Endothelial cell of umbilical vein (primary cell): ENCODE measurements at regions of chr14 and their contacts with region 1.

Region 1: DNA sequence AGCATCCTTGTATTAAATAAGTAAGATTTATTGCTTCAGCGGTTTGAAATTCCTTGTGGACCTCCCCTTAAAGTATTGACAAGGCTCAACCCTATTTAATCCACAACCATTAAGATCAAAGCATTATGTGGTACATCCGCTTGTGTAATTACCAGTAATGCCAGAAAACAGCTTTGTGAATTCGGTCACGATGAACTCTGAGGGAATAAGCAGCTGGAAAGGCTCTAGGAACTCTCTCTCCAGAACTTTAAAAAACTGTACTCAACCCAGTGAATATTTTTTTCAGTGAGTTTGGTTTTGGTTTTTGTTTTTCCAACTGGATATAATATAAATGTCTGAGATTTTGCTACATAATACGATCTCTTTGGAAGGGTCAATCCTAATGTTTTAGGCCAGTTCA is 49.3 kb upstream of the DIO2 start:
- DNase-seq: no peak
- H3K4me3 ChIP-seq: no peak overlapping the region
- H3K27ac ChIP-seq: no peak overlapping the region
- H3K4me1 ChIP-seq: no peaks in the 10 kb centered on the region
- H3K27me3 ChIP-seq: no peaks in the 10 kb centered on the region
- CTCF ChIP-seq: no peak
- POLR2A ChIP-seq: no peak

Region 2: GRCh38 chr14:79740061-79740601 is 520.5 kb before region 1 on chr14:
- CTCF ChIA-PET with region 1: no interaction called
- POLR2A ChIA-PET with region 1: no interaction called
- dilution Hi-C with region 1: no loop called
- intact Hi-C with region 1: loop called (anchors 5 kb)
- DNase-seq: no peak
- H3K4me3 ChIP-seq: no peak overlapping the region
- H3K27ac ChIP-seq: no peak overlapping the region
- H3K4me1 ChIP-seq: no peaks in the 10 kb centered on the region
- H3K27me3 ChIP-seq: no peaks in the 10 kb centered on the region
- CTCF ChIP-seq: no peak
- POLR2A ChIP-seq: no peak

Region 3: DNA sequence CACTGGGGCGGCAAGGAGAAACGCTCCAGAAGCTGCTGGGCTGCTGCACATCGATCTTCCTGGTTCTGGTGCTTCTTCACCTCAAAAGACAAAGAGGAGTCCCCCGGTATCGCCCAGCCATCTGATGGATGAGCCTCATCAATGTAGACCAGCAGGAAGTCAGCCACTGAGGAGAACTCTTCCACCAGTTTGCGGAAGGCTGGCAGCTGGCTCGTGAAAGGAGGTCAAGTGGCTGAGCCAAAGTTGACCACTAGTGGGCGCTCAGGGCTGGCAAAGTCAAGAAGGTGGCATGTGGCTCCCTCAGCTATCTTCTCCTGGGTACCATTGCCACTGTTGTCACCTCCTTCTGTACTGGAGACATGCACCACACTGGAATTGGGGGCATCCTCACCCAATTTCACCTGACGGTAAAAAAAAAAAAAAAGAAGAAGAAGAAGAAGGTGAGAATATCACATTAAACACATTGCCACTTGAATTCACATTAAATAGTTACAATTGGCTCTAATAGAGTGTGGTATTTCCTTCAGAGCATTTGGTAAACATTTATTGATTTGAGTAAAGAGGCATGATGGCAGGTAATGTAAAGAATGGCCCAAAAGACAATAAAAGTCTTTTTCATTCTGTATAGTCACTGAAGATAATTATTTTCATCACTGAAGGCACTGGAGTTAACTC is 57.6 kb before region 1 on chr14:
- CTCF ChIA-PET with region 1: no interaction called
- POLR2A ChIA-PET with region 1: no interaction called
- dilution Hi-C with region 1: no loop called
- intact Hi-C with region 1: no loop called
- DNase-seq: no peak
- H3K4me3 ChIP-seq: no peak overlapping the region
- H3K27ac ChIP-seq: no peak overlapping the region
- H3K4me1 ChIP-seq: no peaks in the 10 kb centered on the region
- H3K27me3 ChIP-seq: no peaks in the 10 kb centered on the region
- CTCF ChIP-seq: peak; percentile 43 to 44
- POLR2A ChIP-seq: no peak